Psoas muscle (tissue), 8 donors: ENCODE measurements at regions of chr21 and their contacts with region 1.

Region 1: DNA sequence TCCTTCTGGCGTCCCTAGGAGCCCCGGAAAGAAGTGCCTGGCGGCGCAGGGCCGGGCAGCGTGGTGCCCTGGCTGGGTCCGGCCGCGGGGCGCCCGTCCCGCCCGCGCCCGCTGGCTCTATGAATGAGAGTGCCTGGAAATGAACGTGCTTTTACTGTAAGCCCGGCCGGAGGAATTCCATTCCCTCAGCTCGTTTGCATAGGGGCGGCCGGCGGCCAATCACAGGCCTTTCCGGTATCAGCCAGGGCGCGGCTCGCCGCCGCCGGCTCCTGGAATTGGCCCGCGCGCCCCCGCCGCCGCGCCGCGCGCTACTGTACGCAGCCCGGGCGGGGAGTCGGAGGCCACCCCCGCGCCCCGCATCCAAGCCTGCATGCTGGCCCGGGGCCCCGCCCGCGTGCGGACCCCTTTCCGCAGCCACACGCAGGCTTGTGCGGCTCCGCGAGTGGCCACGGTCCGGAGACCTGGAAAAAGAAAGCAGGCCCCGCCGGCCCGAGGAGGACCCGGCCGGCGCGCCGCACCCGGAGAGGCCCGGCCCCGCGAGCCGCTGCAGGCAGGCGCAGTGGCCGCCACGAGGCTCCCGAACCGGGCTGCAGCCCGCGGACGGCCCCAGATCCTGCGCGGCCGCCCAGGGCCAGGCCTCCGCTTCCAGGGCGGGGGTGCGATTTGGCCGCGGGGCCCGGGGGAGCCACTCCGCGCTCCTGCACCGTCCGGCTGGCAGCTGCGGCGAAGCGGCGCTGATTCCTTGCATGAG is 160.4 kb downstream of the RUNX1 start:
- DNase-seq: peak; percentile 94 to 95
- ATAC-seq: peak; percentile 74 to 84 (median 78)
- H3K4me3 ChIP-seq: peak overlapping the region; percentile 87
- H3K27ac ChIP-seq: peak overlapping the region; percentile 94
- H3K4me1 ChIP-seq: peaks cover 16% of the 10 kb centered on the region
- H3K27me3 ChIP-seq: peaks cover 0 to 26% (median 8%) of the 10 kb centered on the region in 3 donors
- CTCF ChIP-seq: no peak

Region 2: GRCh38 chr21:34745557-34746255 is 143.0 kb before region 1 on chr21:
- intact Hi-C with region 1: loop called in 1 of 2 experiments (anchors 5 kb)
- DNase-seq: peak; percentile 64 to 81
- ATAC-seq: peak; percentile 80 to 96 (median 84)
- H3K4me3 ChIP-seq: no peak overlapping the region
- H3K27ac ChIP-seq: peak overlapping the region; percentile 17
- H3K4me1 ChIP-seq: peaks cover 8% of the 10 kb centered on the region
- H3K27me3 ChIP-seq: peaks cover 0 to 5% (median 0%) of the 10 kb centered on the region in 3 donors
- CTCF ChIP-seq: peak; percentile 93

Region 3: DNA sequence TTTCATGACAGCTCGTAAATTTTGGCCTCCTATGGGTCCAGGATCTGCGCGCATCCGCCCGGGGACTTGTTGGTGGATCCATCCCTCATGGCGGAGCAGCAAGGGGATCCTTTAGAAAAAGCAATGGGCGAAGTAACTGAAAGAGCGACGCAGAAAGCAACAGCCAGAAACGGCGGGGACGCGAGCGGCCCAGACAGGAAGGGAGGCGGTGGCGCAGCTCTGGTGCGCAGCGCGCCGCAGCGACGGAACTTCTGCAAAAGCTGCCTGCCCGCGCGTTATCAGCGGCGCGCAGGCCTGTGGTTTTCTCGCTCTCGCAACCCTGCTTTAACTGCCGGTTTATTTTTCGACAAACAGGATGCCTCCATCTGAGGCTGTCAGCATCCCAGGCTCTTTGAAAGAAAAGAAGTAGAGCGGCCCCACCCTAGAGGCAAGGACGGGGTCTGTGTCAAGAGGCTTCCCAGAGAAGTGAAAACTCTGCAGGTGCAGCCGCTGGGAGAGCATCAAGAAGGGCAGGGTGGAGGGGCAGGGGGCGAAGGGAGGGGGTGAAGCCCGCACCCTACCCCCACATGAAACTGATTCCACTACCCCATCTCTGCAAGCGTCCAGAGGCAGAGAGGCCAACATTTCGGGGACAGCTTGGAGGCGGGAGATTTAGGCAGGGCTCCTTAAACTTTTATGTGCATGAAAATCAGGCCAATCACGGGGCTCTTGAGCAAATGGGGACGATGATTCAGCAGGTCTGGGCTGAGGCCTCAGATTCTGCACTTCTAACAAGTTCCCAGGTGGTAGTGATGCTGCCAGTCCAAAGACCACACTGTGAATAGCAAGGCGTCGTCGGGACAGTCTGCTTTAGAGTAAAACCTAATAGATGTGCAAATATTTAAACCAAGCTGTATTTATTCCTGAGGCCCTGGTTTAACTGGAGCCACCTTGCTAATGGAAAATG is 138.1 kb after region 1 on chr21:
- intact Hi-C with region 1: no loop called
- DNase-seq: peak; percentile 66 to 76
- ATAC-seq: peak; percentile 26 to 61 (median 40)
- H3K4me3 ChIP-seq: peak overlapping the region; percentile 11
- H3K27ac ChIP-seq: no peak overlapping the region
- H3K4me1 ChIP-seq: peaks cover 4% of the 10 kb centered on the region
- H3K27me3 ChIP-seq: no peaks in the 10 kb centered on the region
- CTCF ChIP-seq: no peak

Region 4: DNA sequence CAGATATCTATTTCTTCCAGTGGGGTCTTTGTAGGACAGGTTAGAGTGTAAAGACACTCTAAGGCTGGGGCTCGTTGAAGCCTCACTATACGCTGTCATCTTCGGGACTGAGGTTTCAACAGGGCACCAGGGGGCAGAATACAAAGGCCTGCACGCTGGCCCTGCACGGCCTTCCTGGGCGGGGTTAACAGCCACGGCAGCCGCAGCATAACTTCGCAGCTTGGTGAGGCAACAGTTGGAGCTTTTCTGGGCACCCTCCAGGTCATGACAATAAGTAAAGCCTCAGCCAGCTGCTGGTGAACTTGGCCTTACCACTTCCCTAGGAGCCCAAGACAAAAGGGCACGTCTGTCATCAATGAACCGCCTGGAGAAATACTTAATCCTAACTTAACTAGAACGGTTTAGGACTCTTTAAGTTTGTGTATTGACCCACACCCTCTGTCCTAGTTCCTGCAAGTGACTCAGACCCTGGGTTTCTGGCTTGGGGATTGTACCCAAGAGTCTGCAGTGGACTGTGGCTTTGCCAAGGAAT is 162.6 kb after region 1 on chr21:
- intact Hi-C with region 1: loop called (anchors 2 to 5 kb)
- DNase-seq: peak; percentile 88 to 94
- ATAC-seq: peak; percentile 75 to 86 (median 80)
- H3K4me3 ChIP-seq: peak overlapping the region; percentile 41
- H3K27ac ChIP-seq: peak overlapping the region; percentile 96
- H3K4me1 ChIP-seq: peaks cover 39% of the 10 kb centered on the region
- H3K27me3 ChIP-seq: no peaks in the 10 kb centered on the region
- CTCF ChIP-seq: peak; percentile 71

Region 5: DNA sequence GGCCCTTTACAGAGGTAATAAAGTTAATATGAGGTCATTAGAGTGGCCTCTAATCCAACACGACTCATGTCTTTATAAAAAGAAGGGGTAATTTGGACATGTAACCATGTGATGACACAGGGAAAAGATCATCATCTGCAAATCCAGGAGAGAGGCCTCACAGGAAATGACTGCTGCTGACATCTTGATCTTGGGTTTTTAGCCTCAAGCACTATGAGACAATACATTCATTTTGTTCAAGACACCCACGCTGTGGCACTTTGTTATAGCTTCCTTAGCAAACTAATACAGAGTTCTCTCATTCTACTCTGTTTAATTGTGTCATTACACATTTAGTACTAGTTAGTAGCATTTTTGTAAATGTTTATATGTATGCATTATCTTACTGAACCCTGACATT is 224.3 kb after region 1 on chr21:
- intact Hi-C with region 1: no loop called
- DNase-seq: no peak
- ATAC-seq: no peak
- H3K4me3 ChIP-seq: no peak overlapping the region
- H3K27ac ChIP-seq: no peak overlapping the region
- H3K4me1 ChIP-seq: peaks cover 4% of the 10 kb centered on the region
- H3K27me3 ChIP-seq: no peaks in the 10 kb centered on the region
- CTCF ChIP-seq: no peak

Region 6: DNA sequence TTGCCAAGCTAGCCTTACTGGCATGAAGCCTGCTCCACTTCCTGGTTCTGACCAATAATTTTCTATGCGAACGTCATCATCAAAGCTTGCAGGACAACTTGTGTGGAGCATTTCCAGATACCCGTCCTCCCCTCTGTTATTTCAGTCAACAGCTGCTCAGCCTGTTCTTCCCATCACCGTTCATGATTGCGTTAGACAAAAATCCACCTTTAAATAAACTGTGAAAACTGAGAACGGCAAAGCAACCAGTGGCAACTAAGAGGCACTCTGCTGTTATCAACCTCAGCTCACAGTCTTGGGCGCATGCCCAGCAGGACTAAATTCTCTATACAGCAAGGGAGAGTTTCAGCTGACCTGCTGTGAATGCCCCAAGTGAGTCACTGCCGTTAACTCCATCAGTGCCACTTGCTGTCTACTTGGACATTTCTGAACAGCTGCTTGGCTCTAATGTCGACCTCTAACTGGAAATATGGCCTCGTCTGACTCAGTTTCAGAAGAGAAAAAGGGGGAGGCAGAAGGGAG is 367.8 kb after region 1 on chr21:
- intact Hi-C with region 1: loop called in 1 of 2 experiments (anchors 10 kb)
- DNase-seq: peak; percentile 91 to 97
- ATAC-seq: peak; percentile 89 to 95 (median 90)
- H3K4me3 ChIP-seq: peak overlapping the region; percentile 27
- H3K27ac ChIP-seq: peak overlapping the region; percentile 97
- H3K4me1 ChIP-seq: peaks cover 53% of the 10 kb centered on the region
- H3K27me3 ChIP-seq: no peaks in the 10 kb centered on the region
- CTCF ChIP-seq: no peak

Region 7: GRCh38 chr21:35400233-35400957 is 511.7 kb after region 1 on chr21:
- intact Hi-C with region 1: loop called in 1 of 2 experiments (anchors 5 kb)
- DNase-seq: no peak
- ATAC-seq: peak; percentile 89 to 97 (median 91)
- H3K4me3 ChIP-seq: peak overlapping the region; percentile 6
- H3K27ac ChIP-seq: no peak overlapping the region
- H3K4me1 ChIP-seq: peaks cover 10% of the 10 kb centered on the region
- H3K27me3 ChIP-seq: no peaks in the 10 kb centered on the region
- CTCF ChIP-seq: peak; percentile 57

Region 8: DNA sequence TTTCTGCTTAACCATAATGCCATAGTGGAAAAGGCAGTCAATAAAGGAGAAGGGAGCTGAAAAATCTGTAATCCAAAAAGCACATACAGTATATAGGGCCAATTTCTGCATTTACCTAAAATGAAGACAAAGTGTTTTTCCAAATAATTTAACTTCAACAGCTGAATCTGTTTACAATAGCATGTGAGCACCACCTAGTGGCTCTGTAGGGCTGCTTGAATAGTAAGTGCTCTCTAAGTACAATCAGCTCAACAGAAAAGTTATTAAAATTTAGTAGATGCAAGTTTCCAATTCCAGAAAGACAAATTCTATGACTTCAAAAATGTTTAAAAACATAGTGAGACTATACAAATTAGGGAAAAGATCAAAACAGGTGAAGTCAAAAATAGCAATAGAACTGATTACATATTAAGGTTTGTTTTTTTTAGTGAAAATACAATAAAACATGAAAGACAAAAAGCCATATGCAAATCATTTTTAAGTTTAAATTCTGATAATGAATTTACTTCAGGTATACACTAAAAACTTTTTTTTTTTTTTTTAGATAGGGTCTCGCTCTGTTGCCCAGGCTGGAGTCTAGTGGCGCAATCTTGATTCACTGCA is 951.6 kb after region 1 on chr21:
- intact Hi-C with region 1: loop called in 1 of 2 experiments (anchors 5 kb)
- DNase-seq: peak in 1 of 2 donors; percentile 27
- ATAC-seq: peak; percentile 66 to 85 (median 78)
- H3K4me3 ChIP-seq: no peak overlapping the region
- H3K27ac ChIP-seq: no peak overlapping the region
- H3K4me1 ChIP-seq: peaks cover 11% of the 10 kb centered on the region
- H3K27me3 ChIP-seq: no peaks in the 10 kb centered on the region
- CTCF ChIP-seq: peak; percentile 88